Vagina (tissue), 2 donors: ENCODE measurements at regions of chr5 and their contacts with region 1.

Region 1: DNA sequence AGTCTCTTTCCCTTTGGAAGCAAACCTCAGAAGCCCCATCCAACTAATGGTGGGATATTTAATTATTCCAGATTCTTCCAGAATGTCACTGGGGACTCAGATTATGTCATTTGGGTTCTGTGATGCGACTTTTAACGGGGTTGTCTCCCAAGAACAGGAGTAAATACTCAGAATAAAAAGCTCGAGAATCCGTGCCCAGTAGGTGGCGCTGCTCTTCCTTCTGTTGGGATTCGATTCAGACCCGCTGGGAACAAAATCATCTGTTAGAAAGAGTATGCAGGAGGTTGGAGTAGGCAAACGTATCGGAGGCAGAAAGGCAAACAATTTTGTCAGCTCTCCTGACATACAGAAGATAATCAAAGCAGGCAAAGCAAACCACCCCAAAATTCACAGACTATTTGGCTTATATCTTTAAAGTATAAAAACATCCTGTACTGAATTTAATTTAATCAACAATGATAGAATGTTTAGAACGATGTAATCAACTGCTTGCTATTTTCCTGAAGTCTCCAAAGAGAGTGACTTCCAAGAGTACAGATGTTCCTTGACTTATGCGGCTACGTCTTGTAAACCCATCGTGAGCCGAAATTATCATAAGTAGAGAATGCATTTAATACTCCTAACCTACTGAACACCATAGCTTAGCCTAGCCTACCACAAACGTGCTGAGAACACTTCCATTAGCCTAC is 169.8 kb upstream of the RAI14 start:
- DNase-seq: no peak
- H3K4me3 ChIP-seq: no peak overlapping the region
- H3K27ac ChIP-seq: peak overlapping the region; percentile 26
- H3K4me1 ChIP-seq: peaks cover 22% of the 10 kb centered on the region
- H3K27me3 ChIP-seq: no peaks in the 10 kb centered on the region
- CTCF ChIP-seq: peak; percentile 74 to 86 (median 86)
- POLR2A ChIP-seq: no peak

Region 2: DNA sequence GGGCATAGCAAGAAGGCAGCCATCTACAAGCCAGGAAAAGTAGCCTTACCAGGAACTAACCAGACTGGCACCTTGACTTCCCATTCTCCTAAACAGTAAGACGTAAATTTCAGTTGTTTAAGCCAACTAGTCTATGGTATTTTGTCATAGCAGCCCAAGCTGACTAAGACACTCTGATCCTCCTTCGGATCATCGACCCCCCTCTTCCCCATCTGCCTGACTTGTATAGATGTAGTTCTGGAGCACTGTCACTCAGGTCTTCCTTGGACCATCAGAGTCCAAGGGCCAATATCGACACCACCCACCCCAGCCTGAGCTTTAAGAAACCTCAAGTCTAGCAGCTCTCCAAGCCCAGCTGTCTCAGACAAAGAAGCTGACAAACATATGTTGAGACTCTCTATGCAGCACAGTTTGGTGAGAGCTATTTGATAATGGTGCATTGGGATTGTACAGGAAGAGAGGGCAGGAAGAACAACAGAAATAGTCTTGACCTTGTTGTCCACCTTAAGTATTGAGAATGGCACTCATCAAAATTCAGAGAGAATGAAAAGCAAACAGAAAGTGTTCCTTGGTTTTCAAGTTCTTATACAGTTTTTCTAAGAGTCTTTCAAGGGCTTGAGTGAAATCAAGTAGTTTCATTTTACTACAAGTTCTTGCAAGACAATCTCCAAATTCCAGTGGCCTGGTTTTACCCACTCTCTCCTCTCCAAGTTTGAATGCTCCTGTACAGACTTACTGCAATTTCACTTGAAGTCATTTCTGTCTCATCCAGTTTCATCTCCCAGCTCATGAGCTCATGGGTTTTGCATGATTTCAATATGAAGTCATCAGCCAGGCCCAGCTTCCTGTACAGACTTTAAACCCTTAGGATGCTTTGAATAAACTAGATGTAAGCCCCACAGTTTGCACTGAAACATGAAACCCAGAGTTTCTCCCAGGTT is 47.5 kb after region 1 on chr5:
- intact Hi-C with region 1: loop called (anchors 10 kb)
- DNase-seq: no peak
- H3K4me3 ChIP-seq: no peak overlapping the region
- H3K27ac ChIP-seq: no peak overlapping the region
- H3K4me1 ChIP-seq: peaks cover 7% of the 10 kb centered on the region
- H3K27me3 ChIP-seq: no peaks in the 10 kb centered on the region
- CTCF ChIP-seq: no peak
- POLR2A ChIP-seq: no peak

Region 3: DNA sequence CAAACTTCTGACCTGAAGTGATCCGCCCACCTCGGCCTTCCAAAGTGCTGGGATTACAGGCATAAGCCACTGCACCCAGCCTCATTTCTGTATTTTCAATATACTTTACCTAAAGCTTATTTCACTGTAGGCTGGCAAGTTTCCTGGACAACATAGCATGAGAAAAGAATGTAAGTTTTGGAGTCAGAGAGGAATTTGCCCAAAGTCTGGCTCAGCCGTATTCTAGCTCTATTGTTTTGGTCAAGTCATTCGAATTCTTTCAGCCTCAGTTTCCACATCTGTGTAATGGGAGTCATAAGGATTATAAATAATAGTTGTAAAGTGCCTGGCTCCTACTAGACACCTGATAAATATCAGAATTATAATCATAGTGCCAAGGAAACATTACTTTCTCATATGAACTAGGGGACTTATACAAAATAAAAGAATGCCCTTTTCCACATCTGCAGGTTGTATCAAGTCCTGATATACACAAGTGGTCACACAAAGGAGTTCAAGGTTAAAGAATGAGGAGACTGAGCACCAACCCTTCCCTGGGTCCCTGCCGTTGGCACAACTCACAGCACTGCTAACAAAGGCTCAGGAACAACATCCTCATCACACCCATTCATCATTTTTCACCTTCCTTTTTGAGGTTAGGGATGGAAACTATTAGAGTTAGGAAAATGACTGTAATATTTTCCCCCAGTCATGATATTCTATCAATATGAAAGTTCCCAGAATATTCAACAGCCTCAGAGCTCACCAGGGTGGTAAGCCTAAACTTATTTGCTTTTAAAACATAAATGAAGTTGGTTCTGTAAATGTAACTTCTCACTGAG is 135.2 kb after region 1 on chr5:
- intact Hi-C with region 1: no loop called
- DNase-seq: no peak
- H3K4me3 ChIP-seq: no peak overlapping the region
- H3K27ac ChIP-seq: peak overlapping the region; percentile 59
- H3K4me1 ChIP-seq: peaks cover 17% of the 10 kb centered on the region
- H3K27me3 ChIP-seq: no peaks in the 10 kb centered on the region
- CTCF ChIP-seq: no peak
- POLR2A ChIP-seq: no peak